ENCODE measurements at regions of chr6 and their contacts with region 1.

Region 1: DNA sequence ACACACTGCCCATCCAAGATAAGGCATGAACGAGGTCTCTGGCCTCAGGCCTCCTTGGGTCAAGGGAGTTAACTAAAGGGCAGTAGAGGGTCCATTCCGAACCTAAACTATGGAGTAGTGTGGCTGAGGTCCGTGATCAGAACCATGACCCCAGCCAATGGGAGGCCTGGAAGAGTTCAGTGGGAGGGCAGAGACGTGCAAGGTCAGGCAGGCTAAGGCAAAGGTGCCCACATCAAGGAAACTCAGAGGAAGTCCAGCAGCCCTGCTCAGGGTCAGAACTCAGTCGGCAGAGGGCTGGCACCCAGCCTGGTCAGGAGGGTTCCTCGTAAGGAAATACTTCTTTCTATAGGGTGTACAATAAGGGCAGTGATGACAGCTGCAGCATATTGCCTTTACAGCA is 152.2 kb downstream of the SOD2 start:
- DNase-seq: no peak
- ATAC-seq: no peak
- H3K4me3 ChIP-seq: no peak overlapping the region
- H3K4me3 Mint-ChIP-seq: no peak overlapping the region
- H3K27ac ChIP-seq: no peak overlapping the region
- H3K27ac Mint-ChIP-seq: no peak overlapping the region
- H3K4me1 ChIP-seq: no peaks in the 10 kb centered on the region
- H3K4me1 Mint-ChIP-seq: no peaks in the 10 kb centered on the region
- H3K27me3 ChIP-seq: no peaks in the 10 kb centered on the region
- H3K27me3 Mint-ChIP-seq: peaks cover under 1% of the 10 kb centered on the region
- CTCF ChIP-seq: no peak

Region 2: DNA sequence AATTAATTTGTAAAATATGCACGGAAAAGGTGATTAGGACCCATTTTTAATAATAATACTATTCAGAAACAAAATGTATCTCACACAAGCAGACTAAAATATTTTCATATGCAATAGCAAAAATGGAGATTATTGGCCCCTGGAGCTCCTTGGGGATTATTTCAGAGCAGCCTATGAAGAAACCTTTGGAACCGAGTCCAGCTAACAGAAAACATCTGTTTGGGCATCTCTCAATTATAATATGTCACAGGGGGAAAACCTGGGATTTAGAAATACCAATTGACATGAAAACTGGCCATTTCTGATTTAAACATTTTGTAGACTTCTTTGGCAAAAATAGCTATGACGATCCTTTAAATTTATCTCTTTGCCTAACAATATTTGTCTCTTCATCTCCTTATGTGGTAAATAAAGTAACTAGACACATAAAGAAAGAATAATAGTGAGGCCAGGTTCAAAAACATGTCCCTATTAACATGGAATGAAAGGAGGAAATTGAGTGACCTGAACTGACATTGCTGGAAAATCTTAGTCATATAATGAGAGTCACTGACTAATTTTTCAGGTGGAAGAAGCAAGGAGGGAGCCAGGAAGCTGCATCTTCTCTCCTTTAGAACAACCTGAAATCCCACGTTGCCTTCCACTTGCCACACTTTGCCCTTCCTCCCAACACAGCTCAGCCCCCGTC is 46.8 kb before region 1 on chr6:
- CTCF ChIA-PET with region 1: no interaction called
- POLR2A ChIA-PET with region 1: no interaction called
- intact Hi-C with region 1: no loop called
- DNase-seq: no peak
- ATAC-seq: no peak
- H3K4me3 ChIP-seq: no peak overlapping the region
- H3K4me3 Mint-ChIP-seq: no peak overlapping the region
- H3K27ac ChIP-seq: no peak overlapping the region
- H3K27ac Mint-ChIP-seq: no peak overlapping the region
- H3K4me1 ChIP-seq: no peaks in the 10 kb centered on the region
- H3K4me1 Mint-ChIP-seq: no peaks in the 10 kb centered on the region
- H3K27me3 ChIP-seq: no peaks in the 10 kb centered on the region
- H3K27me3 Mint-ChIP-seq: peaks cover 13% of the 10 kb centered on the region
- CTCF ChIP-seq: no peak

Region 3: DNA sequence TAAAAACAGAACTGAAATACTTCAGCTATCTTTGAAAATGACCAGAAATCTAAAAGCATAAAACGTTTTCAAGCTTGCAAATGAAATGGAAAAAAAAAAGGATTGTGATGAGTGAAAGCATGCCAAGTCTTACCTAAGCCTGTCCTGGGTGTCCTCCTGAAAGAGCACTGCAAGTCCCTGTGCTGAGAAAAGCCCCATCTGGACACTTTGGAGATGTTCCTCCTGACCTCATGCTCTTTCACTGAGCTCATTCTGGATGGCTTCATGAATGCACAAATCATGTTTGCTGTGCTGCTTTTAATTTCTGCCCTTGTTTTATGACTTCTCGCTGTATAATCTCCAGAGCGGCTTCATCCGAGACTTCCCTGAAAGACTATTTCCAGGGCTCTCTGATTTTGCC is 16.1 kb after region 1 on chr6:
- CTCF ChIA-PET with region 1: interaction called, 3 read pairs
- POLR2A ChIA-PET with region 1: no interaction called
- intact Hi-C with region 1: loop called in 1 of 2 experiments (anchors 1 kb)
- DNase-seq: no peak
- ATAC-seq: no peak
- H3K4me3 ChIP-seq: no peak overlapping the region
- H3K4me3 Mint-ChIP-seq: no peak overlapping the region
- H3K27ac ChIP-seq: no peak overlapping the region
- H3K27ac Mint-ChIP-seq: no peak overlapping the region
- H3K4me1 ChIP-seq: no peaks in the 10 kb centered on the region
- H3K4me1 Mint-ChIP-seq: no peaks in the 10 kb centered on the region
- H3K27me3 ChIP-seq: peaks cover 0 to 3% of the 10 kb centered on the region in 2 experiments
- H3K27me3 Mint-ChIP-seq: peaks cover 22% of the 10 kb centered on the region
- CTCF ChIP-seq: no peak